ENCODE measurements at regions of chr1 and their contacts with region 1.

Region 1: DNA sequence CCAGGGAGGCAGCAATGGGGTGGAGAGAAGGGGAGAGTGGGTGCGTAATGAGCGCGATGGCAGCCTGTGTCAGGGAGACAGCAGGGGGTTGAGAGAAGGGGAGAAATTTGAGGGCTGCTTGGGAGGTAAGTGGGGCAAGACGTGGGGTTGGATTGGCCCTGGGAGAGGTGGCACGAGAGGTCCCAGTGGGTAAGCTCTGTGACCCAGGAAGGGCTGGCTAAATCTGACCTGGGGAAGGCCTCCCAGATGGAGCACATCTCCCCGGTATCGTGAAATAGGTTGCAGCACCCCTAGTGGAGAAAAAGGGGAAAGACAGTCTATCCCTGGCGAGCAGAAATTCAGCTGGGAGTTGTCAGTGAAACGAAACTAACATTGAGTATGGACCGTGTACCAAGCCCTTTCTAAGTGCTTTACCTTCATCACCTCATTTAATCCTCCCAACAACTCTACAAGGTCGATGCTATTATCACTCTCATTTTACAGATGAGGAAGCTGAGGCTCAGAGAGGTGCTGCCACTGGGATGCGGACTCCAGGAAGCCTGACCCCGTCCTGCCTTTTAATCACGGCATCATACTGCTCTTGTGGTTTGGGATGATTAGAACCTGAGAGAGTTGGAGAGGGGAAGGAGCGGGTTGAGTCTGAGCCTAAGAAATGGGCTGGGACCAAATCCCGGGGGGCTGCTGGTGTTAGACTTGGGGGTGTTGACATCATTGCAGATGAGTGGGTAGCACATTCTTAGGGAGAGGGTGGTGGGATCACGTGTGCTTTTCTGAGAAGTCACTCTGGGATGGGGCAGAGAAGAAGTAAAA is 56.6 kb upstream of the RPL11 start:
- DNase-seq: peak in 11 of 14 experiments; percentile 29 to 84 (median 45)
- ATAC-seq: peak; percentile 92
- H3K4me3 ChIP-seq: peak overlapping the region; percentile 48
- H3K4me3 Mint-ChIP-seq: peak overlapping the region; percentile 11
- H3K27ac ChIP-seq: peak overlapping the region in 1 of 2 donors; percentile 32
- H3K27ac Mint-ChIP-seq: peak overlapping the region; percentile 81
- H3K4me1 ChIP-seq: peaks cover 25% of the 10 kb centered on the region
- H3K4me1 Mint-ChIP-seq: peaks cover 33% of the 10 kb centered on the region
- H3K27me3 ChIP-seq: no peaks in the 10 kb centered on the region
- H3K27me3 Mint-ChIP-seq: no peaks in the 10 kb centered on the region
- CTCF ChIP-seq: peak; percentile 84

Region 2: GRCh38 chr1:23484253-23485001 is 150.6 kb before region 1 on chr1:
- CTCF ChIA-PET with region 1: interaction called, 10 read pairs
- POLR2A ChIA-PET with region 1: no interaction called
- intact Hi-C with region 1: no loop called
- DNase-seq: peak; percentile 85 to 96 (median 92)
- ATAC-seq: peak; percentile 93
- H3K4me3 ChIP-seq: peak overlapping the region; percentile 55
- H3K4me3 Mint-ChIP-seq: peak overlapping the region; percentile 92
- H3K27ac ChIP-seq: no peak overlapping the region
- H3K27ac Mint-ChIP-seq: peak overlapping the region; percentile 55
- H3K4me1 ChIP-seq: peaks cover 17% of the 10 kb centered on the region
- H3K4me1 Mint-ChIP-seq: peaks cover 19% of the 10 kb centered on the region
- H3K27me3 ChIP-seq: peaks cover 17 to 24% of the 10 kb centered on the region in 2 experiments
- H3K27me3 Mint-ChIP-seq: peaks cover 28% of the 10 kb centered on the region
- CTCF ChIP-seq: no peak

Region 3: DNA sequence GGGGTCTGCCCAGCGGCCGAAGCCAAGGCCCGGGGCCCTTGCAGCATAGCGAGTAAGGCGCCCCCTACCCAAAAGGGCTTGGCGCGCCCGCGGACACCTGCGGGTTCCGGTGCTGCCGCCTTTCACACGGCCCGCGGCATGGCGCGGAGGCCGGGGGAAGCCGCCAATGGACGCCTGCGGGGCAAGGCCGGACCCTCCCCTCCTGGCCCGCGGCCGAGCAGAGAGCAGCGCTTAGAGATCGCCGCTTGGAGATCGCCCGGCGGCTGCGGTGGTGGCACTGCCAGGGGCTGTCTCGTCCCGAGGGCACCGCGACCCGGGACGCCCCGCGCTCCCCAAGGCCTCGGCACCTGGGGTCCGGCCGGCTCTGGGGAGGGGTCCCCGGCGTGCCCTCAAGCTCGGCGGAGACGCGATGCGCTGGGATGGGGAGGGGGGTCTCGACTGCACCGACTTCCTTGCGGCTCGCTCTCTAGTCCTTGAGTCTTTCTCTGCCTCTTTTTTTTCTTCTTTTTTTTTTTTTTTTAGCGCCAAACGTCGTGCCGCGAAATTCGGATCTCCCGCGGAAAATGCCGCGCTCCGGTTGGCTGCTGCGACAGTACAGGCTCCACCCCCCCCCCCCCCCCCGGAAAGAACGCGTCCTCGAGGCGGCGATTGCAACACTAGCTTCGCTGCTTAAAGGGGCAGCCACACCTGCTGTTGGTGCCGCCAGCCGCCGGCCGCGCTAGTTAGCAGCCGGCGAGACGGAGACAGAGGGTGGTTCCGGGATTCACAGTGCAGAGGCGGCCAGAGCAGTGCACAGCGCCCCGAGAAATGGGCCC is 104.1 kb before region 1 on chr1 and contains the start of gene E2F2:
- CTCF ChIA-PET with region 1: interaction called, 16 read pairs
- POLR2A ChIA-PET with region 1: interaction called, 4 read pairs
- intact Hi-C with region 1: no loop called
- DNase-seq: peak; percentile 66 to 92 (median 80)
- ATAC-seq: peak; percentile 79
- H3K4me3 ChIP-seq: peak within 1 kb of the TSS; percentile 44
- H3K4me3 Mint-ChIP-seq: peak within 1 kb of the TSS; percentile 91
- H3K27ac ChIP-seq: peak within 1 kb of the TSS in 1 of 2 donors; percentile 58
- H3K27ac Mint-ChIP-seq: peak within 1 kb of the TSS; percentile 84
- H3K4me1 ChIP-seq: peaks cover 78% of the 10 kb centered on the region
- H3K4me1 Mint-ChIP-seq: peaks cover 80% of the 10 kb centered on the region
- H3K27me3 ChIP-seq: no peaks in the 10 kb centered on the region
- H3K27me3 Mint-ChIP-seq: no peaks in the 10 kb centered on the region
- CTCF ChIP-seq: no peak
- total RNA-seq, gene E2F2: 0.50 to 0.69 TPM

Region 4: DNA sequence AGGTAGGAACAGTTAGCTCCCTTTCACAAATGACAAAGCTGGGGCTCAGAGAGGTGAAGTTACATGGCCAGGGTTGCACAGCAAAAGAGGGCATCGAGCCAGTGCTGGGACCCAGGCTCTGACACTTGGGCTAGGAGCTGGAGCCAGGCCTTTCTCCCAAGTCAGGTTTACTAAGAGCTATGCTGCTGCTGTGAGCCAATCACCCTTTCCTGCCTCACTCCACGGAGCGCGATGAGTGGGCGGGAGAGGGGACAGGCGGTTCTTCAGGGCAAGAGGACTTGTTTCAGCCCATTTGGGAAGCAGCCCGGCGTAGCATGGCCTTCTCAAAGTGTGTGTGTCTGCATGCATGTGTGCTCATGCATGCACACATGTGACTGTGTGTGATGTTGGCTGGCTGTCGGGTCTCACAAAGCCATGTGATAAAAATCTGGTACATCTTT is 86.3 kb before region 1 on chr1:
- CTCF ChIA-PET with region 1: interaction called, 81 read pairs
- POLR2A ChIA-PET with region 1: interaction called, 314 read pairs
- intact Hi-C with region 1: loop called (anchors 1 kb)
- DNase-seq: no peak
- ATAC-seq: no peak
- H3K4me3 ChIP-seq: no peak overlapping the region
- H3K4me3 Mint-ChIP-seq: no peak overlapping the region
- H3K27ac ChIP-seq: no peak overlapping the region
- H3K27ac Mint-ChIP-seq: no peak overlapping the region
- H3K4me1 ChIP-seq: peaks cover 35% of the 10 kb centered on the region
- H3K4me1 Mint-ChIP-seq: peaks cover 41% of the 10 kb centered on the region
- H3K27me3 ChIP-seq: no peaks in the 10 kb centered on the region
- H3K27me3 Mint-ChIP-seq: no peaks in the 10 kb centered on the region
- CTCF ChIP-seq: no peak

Region 5: DNA sequence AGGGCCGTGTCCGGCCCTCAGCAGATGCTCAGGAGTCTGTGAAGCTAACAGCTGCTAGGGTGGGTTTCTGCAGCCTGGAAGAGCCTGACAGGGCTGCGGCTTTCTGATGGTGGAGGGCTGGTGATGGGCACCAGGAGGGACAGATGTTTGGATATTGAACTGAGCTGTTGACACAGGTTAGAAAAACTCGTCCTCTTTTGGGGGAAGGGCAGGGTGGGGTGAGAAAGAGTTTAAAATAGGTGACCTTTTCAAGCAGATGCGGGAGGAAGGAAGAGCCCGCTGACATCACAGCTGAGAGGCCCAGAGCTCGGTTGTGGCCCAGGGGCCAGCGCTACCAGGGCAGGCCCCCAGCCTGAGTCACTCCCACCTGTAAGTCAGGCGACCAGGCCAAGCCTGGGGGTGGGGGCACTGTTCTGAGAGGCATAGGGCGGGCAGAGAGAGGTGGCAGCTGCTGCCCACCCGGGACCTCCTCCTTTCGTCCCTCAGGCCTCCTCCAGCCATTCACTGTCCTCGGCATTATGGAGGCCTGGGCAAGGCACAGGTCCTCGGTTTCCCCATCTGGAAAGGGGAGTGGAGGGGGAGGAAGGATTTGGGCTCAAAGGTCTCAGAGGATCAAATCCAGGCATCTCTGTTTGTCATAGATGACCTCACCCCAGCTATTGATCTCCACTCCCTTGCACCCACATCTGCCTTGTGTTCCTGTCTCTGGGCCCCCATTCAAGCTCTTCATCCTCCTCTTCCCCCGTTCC is 43.4 kb before region 1 on chr1:
- CTCF ChIA-PET with region 1: interaction called, 25 read pairs
- POLR2A ChIA-PET with region 1: interaction called, 5 read pairs
- intact Hi-C with region 1: loop called in 1 of 2 experiments (anchors 5 kb)
- DNase-seq: peak in 3 of 14 experiments; percentile 24 to 63 (median 53)
- ATAC-seq: peak; percentile 23
- H3K4me3 ChIP-seq: no peak overlapping the region
- H3K4me3 Mint-ChIP-seq: peak overlapping the region; percentile 44
- H3K27ac ChIP-seq: peak overlapping the region in 1 of 2 donors; percentile 28
- H3K27ac Mint-ChIP-seq: peak overlapping the region; percentile 78
- H3K4me1 ChIP-seq: peaks cover 63% of the 10 kb centered on the region
- H3K4me1 Mint-ChIP-seq: peaks cover 65% of the 10 kb centered on the region
- H3K27me3 ChIP-seq: no peaks in the 10 kb centered on the region
- H3K27me3 Mint-ChIP-seq: no peaks in the 10 kb centered on the region
- CTCF ChIP-seq: no peak

Region 6: DNA sequence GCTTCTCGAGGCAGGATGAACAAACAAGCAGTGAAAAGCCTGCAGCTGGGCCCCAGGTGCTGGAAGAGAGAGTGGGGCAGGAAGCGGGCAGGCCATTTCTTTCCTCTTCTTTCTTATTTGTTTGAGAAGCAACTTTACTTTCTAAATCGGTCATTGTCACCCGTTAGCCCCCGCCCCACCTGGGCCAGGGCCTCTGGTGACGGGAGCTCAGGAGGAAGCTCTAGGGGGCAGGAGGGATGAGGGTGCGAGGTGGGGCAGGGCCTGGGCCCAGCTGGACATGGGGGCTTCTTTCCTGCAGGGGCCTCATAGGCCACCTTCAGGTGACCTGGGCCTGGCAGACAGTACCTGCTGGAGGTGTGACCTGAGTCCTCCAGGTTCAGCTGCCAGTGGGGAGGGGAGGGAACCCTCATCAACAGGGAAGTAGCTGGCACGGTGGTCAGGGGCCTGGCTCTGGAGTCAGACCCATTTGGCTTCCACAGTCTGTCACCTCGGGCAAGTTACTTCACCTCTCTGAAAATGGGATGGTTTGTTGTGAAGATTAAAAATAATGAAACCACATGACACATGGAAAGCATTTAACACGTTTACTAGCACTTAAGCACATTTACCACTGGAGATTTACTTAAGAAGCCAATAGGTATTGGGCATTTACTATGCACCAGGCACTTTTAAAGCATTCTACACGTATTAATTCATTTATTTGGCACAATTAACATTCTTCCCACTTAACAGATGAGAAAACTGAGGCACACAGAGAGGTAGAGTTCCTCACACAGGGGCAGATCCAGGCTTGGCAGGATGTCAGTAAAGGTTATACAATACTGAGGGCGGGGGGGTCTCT is 21.6 kb before region 1 on chr1:
- CTCF ChIA-PET with region 1: interaction called, 58 read pairs
- POLR2A ChIA-PET with region 1: interaction called, 57 read pairs
- intact Hi-C with region 1: loop called in 1 of 2 experiments (anchors 2 kb)
- DNase-seq: peak in 13 of 14 experiments; percentile 27 to 85 (median 60)
- ATAC-seq: peak; percentile 54
- H3K4me3 ChIP-seq: no peak overlapping the region
- H3K4me3 Mint-ChIP-seq: peak overlapping the region; percentile 51
- H3K27ac ChIP-seq: peak overlapping the region; percentile 71 to 72
- H3K27ac Mint-ChIP-seq: peak overlapping the region; percentile 97
- H3K4me1 ChIP-seq: peaks cover 73% of the 10 kb centered on the region
- H3K4me1 Mint-ChIP-seq: peaks cover 84% of the 10 kb centered on the region
- H3K27me3 ChIP-seq: no peaks in the 10 kb centered on the region
- H3K27me3 Mint-ChIP-seq: no peaks in the 10 kb centered on the region
- CTCF ChIP-seq: no peak

Measured in CD4-positive, alpha-beta T cell (primary cell).